Naive thymus-derived CD4-positive, alpha-beta T cell (primary cell): ENCODE measurements at regions of chr5 and their contacts with region 1.

Region 1: GRCh38 chr5:50667653-50668595 is 1.5 kb downstream of the PARP8 start:
- DNase-seq: peak; percentile 80 to 95 (median 89)
- ATAC-seq: peak; percentile 79
- H3K4me3 ChIP-seq: peak overlapping the region; percentile 96
- H3K4me3 Mint-ChIP-seq: peak overlapping the region; percentile 92 to 99 (median 98)
- H3K27ac ChIP-seq: peak overlapping the region; percentile 97
- H3K27ac Mint-ChIP-seq: peak overlapping the region; percentile 97 to 100 (median 98)
- H3K4me1 ChIP-seq: peaks cover 23 to 37% of the 10 kb centered on the region in 2 donors
- H3K4me1 Mint-ChIP-seq: peaks cover 42 to 76% (median 70%) of the 10 kb centered on the region in 7 donors
- H3K27me3 ChIP-seq: no peaks in the 10 kb centered on the region
- H3K27me3 Mint-ChIP-seq: peaks cover 0 to 2% (median 0%) of the 10 kb centered on the region in 5 donors

Region 2: GRCh38 chr5:50415912-50416311 is 252.0 kb before region 1 on chr5:
- CTCF ChIA-PET with region 1: no interaction called
- POLR2A ChIA-PET with region 1: no interaction called
- intact Hi-C with region 1: loop called (anchors 5 kb)
- DNase-seq: peak in 7 of 9 donors; percentile 57 to 85 (median 74)
- ATAC-seq: peak; percentile 86
- H3K4me3 ChIP-seq: no peak overlapping the region
- H3K4me3 Mint-ChIP-seq: peak overlapping the region in 7 of 10 donors; percentile 42 to 69 (median 60)
- H3K27ac ChIP-seq: peak overlapping the region; percentile 65
- H3K27ac Mint-ChIP-seq: peak overlapping the region in 8 of 9 donors; percentile 68 to 96 (median 93)
- H3K4me1 ChIP-seq: peaks cover 37 to 40% of the 10 kb centered on the region in 2 donors
- H3K4me1 Mint-ChIP-seq: peaks cover 49 to 97% (median 90%) of the 10 kb centered on the region in 7 donors
- H3K27me3 ChIP-seq: no peaks in the 10 kb centered on the region
- H3K27me3 Mint-ChIP-seq: no peaks in the 10 kb centered on the region

Region 3: DNA sequence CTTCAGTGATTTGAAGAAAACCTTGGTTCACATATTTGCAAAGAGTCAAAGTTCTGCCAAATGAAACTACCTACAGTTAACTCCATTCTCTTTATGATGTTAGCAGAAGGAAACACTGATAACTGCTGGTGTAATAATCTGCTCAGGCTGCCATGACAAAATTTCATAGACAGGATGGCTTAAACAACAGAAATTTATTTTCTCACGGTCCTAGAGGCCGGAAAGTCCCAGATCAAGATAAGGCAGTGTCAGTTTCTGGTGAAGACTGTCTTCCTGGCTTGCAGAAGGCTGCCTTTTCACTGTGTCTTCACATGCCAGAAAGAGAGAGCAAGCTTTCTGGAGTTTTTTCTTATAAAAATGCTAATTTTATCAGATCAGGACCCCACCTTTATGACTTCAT is 103.8 kb before region 1 on chr5:
- CTCF ChIA-PET with region 1: no interaction called
- POLR2A ChIA-PET with region 1: no interaction called
- intact Hi-C with region 1: loop called in 1 of 2 experiments (anchors 1 kb)
- DNase-seq: peak in 7 of 9 donors; percentile 1 to 59 (median 18)
- ATAC-seq: peak; percentile 77
- H3K4me3 ChIP-seq: no peak overlapping the region
- H3K4me3 Mint-ChIP-seq: peak overlapping the region in 8 of 10 donors; percentile 26 to 71 (median 48)
- H3K27ac ChIP-seq: no peak overlapping the region
- H3K27ac Mint-ChIP-seq: peak overlapping the region in 4 of 9 donors; percentile 7 to 76 (median 47)
- H3K4me1 ChIP-seq: peaks cover 0 to 29% of the 10 kb centered on the region in 2 donors
- H3K4me1 Mint-ChIP-seq: peaks cover 6 to 53% (median 35%) of the 10 kb centered on the region in 7 donors
- H3K27me3 ChIP-seq: no peaks in the 10 kb centered on the region
- H3K27me3 Mint-ChIP-seq: peaks cover 0 to 3% (median 0%) of the 10 kb centered on the region in 5 donors

Region 4: GRCh38 chr5:50595199-50595598 is 72.7 kb before region 1 on chr5:
- CTCF ChIA-PET with region 1: no interaction called
- POLR2A ChIA-PET with region 1: interaction called, 5 read pairs
- intact Hi-C with region 1: loop called (anchors 2 to 5 kb)
- DNase-seq: no peak
- ATAC-seq: no peak
- H3K4me3 ChIP-seq: no peak overlapping the region
- H3K4me3 Mint-ChIP-seq: no peak overlapping the region
- H3K27ac ChIP-seq: no peak overlapping the region
- H3K27ac Mint-ChIP-seq: peak overlapping the region in 2 of 9 donors; percentile 34
- H3K4me1 ChIP-seq: peaks cover 31 to 46% of the 10 kb centered on the region in 2 donors
- H3K4me1 Mint-ChIP-seq: peaks cover 23 to 54% (median 39%) of the 10 kb centered on the region in 7 donors
- H3K27me3 ChIP-seq: no peaks in the 10 kb centered on the region
- H3K27me3 Mint-ChIP-seq: no peaks in the 10 kb centered on the region

Region 5: GRCh38 chr5:50711273-50711672 is 43.3 kb after region 1 on chr5:
- CTCF ChIA-PET with region 1: no interaction called
- POLR2A ChIA-PET with region 1: interaction called, 3 read pairs
- intact Hi-C with region 1: loop called (anchors 1 kb)
- DNase-seq: peak in 8 of 9 donors; percentile 48 to 82 (median 74)
- ATAC-seq: peak; percentile 94
- H3K4me3 ChIP-seq: peak overlapping the region; percentile 31
- H3K4me3 Mint-ChIP-seq: peak overlapping the region; percentile 78 to 89 (median 85)
- H3K27ac ChIP-seq: peak overlapping the region; percentile 76
- H3K27ac Mint-ChIP-seq: peak overlapping the region; percentile 82 to 98 (median 94)
- H3K4me1 ChIP-seq: peaks cover 40 to 72% of the 10 kb centered on the region in 2 donors
- H3K4me1 Mint-ChIP-seq: peaks cover 57 to 96% (median 87%) of the 10 kb centered on the region in 7 donors
- H3K27me3 ChIP-seq: no peaks in the 10 kb centered on the region
- H3K27me3 Mint-ChIP-seq: no peaks in the 10 kb centered on the region

Region 6: GRCh38 chr5:50751064-50751657 is 83.2 kb after region 1 on chr5:
- CTCF ChIA-PET with region 1: interaction called, 5 read pairs
- POLR2A ChIA-PET with region 1: interaction called, 19 read pairs
- intact Hi-C with region 1: loop called (anchors 1 kb)
- DNase-seq: peak in 7 of 9 donors; percentile 58 to 79 (median 69)
- ATAC-seq: peak; percentile 99
- H3K4me3 ChIP-seq: no peak overlapping the region
- H3K4me3 Mint-ChIP-seq: peak overlapping the region in 9 of 10 donors; percentile 37 to 69 (median 61)
- H3K27ac ChIP-seq: no peak overlapping the region
- H3K27ac Mint-ChIP-seq: peak overlapping the region; percentile 68 to 92 (median 89)
- H3K4me1 ChIP-seq: peaks cover 27 to 32% of the 10 kb centered on the region in 2 donors
- H3K4me1 Mint-ChIP-seq: peaks cover 36 to 75% (median 61%) of the 10 kb centered on the region in 7 donors
- H3K27me3 ChIP-seq: no peaks in the 10 kb centered on the region
- H3K27me3 Mint-ChIP-seq: no peaks in the 10 kb centered on the region